ENCODE measurements at regions of chr3 and their contacts with region 1.

Region 1: GRCh38 chr3:127598841-127599570 is 795 bp downstream of the MCM2 start:
- DNase-seq: no peak
- ATAC-seq: no peak
- H3K4me3 ChIP-seq: peak overlapping the region; percentile 36 to 65 (median 57)
- H3K4me3 Mint-ChIP-seq: peak overlapping the region; percentile 82
- H3K27ac ChIP-seq: peak overlapping the region; percentile 75 to 87
- H3K27ac Mint-ChIP-seq: peak overlapping the region; percentile 97
- H3K4me1 ChIP-seq: peaks cover 10 to 16% of the 10 kb centered on the region in 2 donors
- H3K4me1 Mint-ChIP-seq: peaks cover 24% of the 10 kb centered on the region
- H3K27me3 ChIP-seq: no peaks in the 10 kb centered on the region
- H3K27me3 Mint-ChIP-seq: no peaks in the 10 kb centered on the region
- CTCF ChIP-seq: no peak

Region 2: DNA sequence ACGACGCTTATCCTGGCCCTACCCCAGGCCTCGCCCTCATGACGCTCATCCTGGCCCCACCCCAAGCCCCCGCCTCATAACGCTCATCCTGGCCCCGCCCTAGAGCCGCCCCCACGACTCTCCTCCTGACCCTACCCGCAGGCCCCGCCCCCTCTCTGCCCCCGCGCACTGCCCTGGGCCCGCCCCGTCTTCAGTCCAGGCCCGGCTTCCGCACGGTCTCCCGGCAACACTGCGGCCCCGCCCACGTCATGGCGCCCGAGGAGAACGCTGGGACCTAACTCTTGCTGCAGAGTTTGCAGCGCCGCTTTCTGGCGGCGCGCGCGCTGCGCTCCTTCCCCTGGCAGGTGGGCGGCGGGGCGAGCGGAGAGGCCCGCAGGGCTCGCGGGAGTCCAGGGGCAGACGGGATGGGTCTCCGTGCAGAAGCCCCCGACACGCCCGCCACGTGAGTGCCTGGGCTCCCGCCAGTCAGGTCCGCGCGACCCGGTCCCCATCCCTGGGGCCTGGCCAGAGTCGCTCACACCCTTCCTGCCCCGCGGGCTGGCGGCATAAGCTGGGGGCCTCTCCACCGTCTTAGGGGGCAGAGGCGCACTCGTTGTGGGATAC is 1682.5 kb before region 1 on chr3:
- CTCF ChIA-PET with region 1: no interaction called
- POLR2A ChIA-PET with region 1: no interaction called
- intact Hi-C with region 1: loop called (anchors 5 kb)
- DNase-seq: peak; percentile 94
- ATAC-seq: peak; percentile 90
- H3K4me3 ChIP-seq: peak overlapping the region; percentile 21 to 77 (median 74)
- H3K4me3 Mint-ChIP-seq: peak overlapping the region; percentile 93
- H3K27ac ChIP-seq: peak overlapping the region; percentile 78 to 85
- H3K27ac Mint-ChIP-seq: peak overlapping the region; percentile 96
- H3K4me1 ChIP-seq: peaks cover 0 to 15% of the 10 kb centered on the region in 2 donors
- H3K4me1 Mint-ChIP-seq: peaks cover 11% of the 10 kb centered on the region
- H3K27me3 ChIP-seq: no peaks in the 10 kb centered on the region
- H3K27me3 Mint-ChIP-seq: no peaks in the 10 kb centered on the region
- CTCF ChIP-seq: no peak

Region 3: DNA sequence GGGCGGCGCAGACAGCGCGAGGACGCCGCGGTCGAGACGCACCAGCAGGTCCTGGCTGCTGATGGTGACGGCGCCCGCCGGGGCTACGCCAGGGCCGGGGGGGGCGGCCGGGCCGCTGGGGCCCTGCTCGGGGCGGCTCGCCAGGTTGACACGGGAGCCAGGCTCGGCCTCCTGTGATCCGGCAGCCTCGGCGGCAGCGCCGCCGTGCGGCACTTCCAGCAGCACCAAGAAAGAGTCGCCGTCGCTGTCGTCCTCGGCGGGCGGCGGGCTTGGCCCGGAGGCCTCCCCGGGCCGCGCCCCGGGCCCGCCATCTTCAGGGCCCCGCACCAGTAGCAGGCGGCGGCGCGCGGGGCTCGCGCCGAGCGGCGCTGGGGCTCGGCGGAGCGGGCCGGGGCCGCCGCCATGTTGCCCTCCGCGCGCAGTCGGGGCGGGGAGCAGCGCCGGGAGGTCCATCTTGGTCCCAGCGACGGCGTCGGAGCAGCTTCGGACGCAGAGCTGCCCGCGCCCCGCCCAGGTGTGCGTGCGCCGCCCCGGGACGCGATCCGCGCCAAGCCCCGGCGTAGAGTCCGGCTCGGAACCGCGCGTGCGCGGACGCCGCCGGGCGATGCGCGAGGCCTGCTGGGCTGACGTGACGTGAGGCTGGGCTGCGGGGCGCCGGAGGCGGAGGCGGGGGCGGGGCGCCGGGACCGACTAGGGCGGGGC is 1123.4 kb before region 1 on chr3 and contains the start of gene ZXDC:
- CTCF ChIA-PET with region 1: no interaction called
- POLR2A ChIA-PET with region 1: no interaction called
- intact Hi-C with region 1: loop called (anchors 2 kb)
- DNase-seq: peak; percentile 96
- ATAC-seq: peak; percentile 84
- H3K4me3 ChIP-seq: peak within 1 kb of the TSS; percentile 51 to 84 (median 65)
- H3K4me3 Mint-ChIP-seq: peak within 1 kb of the TSS; percentile 89
- H3K27ac ChIP-seq: peak within 1 kb of the TSS; percentile 61 to 73
- H3K27ac Mint-ChIP-seq: peak within 1 kb of the TSS; percentile 91
- H3K4me1 ChIP-seq: peaks cover 35 to 39% of the 10 kb centered on the region in 2 donors
- H3K4me1 Mint-ChIP-seq: peaks cover 40% of the 10 kb centered on the region
- H3K27me3 ChIP-seq: no peaks in the 10 kb centered on the region
- H3K27me3 Mint-ChIP-seq: no peaks in the 10 kb centered on the region
- CTCF ChIP-seq: peak; percentile 29
- total RNA-seq, gene ZXDC: 70.9 and 75.9 TPM in 2 replicates

Region 4: GRCh38 chr3:127574880-127575878 is 23.8 kb before region 1 on chr3:
- CTCF ChIA-PET with region 1: interaction called, 26 read pairs
- POLR2A ChIA-PET with region 1: no interaction called
- intact Hi-C with region 1: loop called (anchors 1 kb)
- DNase-seq: peak; percentile 92
- ATAC-seq: peak; percentile 97
- H3K4me3 ChIP-seq: no peak overlapping the region
- H3K4me3 Mint-ChIP-seq: peak overlapping the region; percentile 52
- H3K27ac ChIP-seq: no peak overlapping the region
- H3K27ac Mint-ChIP-seq: peak overlapping the region; percentile 62
- H3K4me1 ChIP-seq: peaks cover 4 to 10% of the 10 kb centered on the region in 2 donors
- H3K4me1 Mint-ChIP-seq: peaks cover 9% of the 10 kb centered on the region
- H3K27me3 ChIP-seq: no peaks in the 10 kb centered on the region
- H3K27me3 Mint-ChIP-seq: no peaks in the 10 kb centered on the region
- CTCF ChIP-seq: peak; percentile 92

Region 5: DNA sequence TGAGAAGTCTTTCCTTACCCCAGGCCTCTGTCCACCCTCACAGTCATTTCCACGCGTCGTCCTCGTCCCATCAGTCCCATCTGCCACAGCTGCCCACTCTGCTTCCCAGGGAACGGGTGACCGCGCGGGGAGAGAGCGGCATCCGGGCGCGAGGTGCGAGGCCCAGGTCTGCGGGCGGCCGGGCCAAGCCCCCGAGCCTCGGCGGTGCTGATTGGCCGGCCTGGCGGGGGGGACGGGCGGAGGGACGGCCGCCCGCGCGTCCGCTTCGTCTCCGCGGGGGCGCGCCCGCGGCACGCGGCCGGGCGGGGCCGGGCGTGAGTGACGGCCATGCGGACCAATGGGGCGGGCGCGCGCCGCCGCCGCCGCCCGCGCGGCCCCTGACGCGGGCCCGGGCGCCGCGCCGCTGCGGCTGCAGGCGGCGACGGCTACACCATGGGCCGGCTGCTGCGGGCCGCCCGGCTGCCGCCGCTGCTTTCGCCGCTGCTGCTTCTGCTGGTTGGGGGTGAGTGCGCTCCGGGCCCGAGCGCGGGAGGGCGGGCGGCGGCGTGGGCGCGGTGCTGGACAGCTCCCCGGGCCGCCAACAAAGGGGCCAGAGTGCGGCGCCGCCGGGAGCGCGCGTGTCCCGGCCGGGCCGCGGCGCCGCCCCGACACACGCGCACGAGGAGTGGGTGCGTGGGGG is 29.9 kb after region 1 on chr3 and contains the start of gene PODXL2:
- CTCF ChIA-PET with region 1: no interaction called
- POLR2A ChIA-PET with region 1: no interaction called
- intact Hi-C with region 1: loop called (anchors 2 kb)
- DNase-seq: peak; percentile 64
- ATAC-seq: peak; percentile 59
- H3K4me3 ChIP-seq: peak within 1 kb of the TSS; percentile 2 to 72 (median 46)
- H3K4me3 Mint-ChIP-seq: peak within 1 kb of the TSS; percentile 94
- H3K27ac ChIP-seq: no peak within 1 kb of the TSS
- H3K27ac Mint-ChIP-seq: peak within 1 kb of the TSS; percentile 79
- H3K4me1 ChIP-seq: peaks cover 14 to 17% of the 10 kb centered on the region in 2 donors
- H3K4me1 Mint-ChIP-seq: peaks cover 27% of the 10 kb centered on the region
- H3K27me3 ChIP-seq: peaks cover 0 to 24% (median 13%) of the 10 kb centered on the region in 4 experiments
- H3K27me3 Mint-ChIP-seq: peaks cover 24% of the 10 kb centered on the region
- CTCF ChIP-seq: no peak
- total RNA-seq, gene PODXL2: 3.6 and 4.0 TPM in 2 replicates

Region 6: DNA sequence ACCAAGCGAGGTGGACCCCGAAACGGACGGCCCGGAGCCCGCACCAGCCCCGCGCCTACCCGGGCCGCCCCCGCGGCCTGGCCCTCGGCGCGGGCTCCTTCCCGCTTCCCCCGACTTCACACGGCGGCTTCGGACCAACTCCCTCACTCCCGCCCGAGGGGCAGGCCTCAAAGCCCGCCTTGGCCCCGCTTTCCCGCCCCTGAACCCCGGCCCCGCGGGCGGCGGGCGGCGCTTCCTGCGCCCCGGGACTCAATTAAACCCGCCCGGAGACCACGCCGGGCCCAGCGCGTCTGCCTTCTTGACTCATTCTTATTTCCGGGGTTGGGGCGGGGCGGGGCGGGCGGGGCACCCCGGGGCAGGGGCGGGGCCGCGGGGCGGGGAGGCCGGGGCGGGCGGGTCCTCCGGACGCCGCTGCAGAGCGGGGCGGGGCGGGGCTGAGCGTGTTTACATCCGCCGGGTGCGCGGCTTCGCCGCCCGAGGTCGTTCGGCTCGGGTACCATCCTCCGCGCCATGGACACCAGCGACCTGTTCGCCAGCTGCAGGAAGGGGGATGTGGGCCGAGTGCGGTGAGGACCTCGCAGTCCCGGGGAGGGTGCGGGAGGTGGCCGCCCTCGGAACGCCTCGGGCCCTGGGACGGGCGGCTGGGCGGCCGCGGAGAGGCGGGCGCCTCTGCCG is 73.6 kb after region 1 on chr3 and contains the start of gene ABTB1:
- CTCF ChIA-PET with region 1: interaction called, 3 read pairs
- POLR2A ChIA-PET with region 1: interaction called, 4 read pairs
- intact Hi-C with region 1: loop called (anchors 1 kb)
- DNase-seq: peak; percentile 88
- ATAC-seq: peak; percentile 87
- H3K4me3 ChIP-seq: peak within 1 kb of the TSS; percentile 41 to 87 (median 79)
- H3K4me3 Mint-ChIP-seq: peak within 1 kb of the TSS; percentile 94
- H3K27ac ChIP-seq: peak within 1 kb of the TSS; percentile 83 to 96
- H3K27ac Mint-ChIP-seq: peak within 1 kb of the TSS; percentile 98
- H3K4me1 ChIP-seq: peaks cover 16 to 22% of the 10 kb centered on the region in 2 donors
- H3K4me1 Mint-ChIP-seq: peaks cover 29% of the 10 kb centered on the region
- H3K27me3 ChIP-seq: no peaks in the 10 kb centered on the region
- H3K27me3 Mint-ChIP-seq: no peaks in the 10 kb centered on the region
- CTCF ChIP-seq: no peak
- total RNA-seq, gene ABTB1: 132 and 141 TPM in 2 replicates

Region 7: DNA sequence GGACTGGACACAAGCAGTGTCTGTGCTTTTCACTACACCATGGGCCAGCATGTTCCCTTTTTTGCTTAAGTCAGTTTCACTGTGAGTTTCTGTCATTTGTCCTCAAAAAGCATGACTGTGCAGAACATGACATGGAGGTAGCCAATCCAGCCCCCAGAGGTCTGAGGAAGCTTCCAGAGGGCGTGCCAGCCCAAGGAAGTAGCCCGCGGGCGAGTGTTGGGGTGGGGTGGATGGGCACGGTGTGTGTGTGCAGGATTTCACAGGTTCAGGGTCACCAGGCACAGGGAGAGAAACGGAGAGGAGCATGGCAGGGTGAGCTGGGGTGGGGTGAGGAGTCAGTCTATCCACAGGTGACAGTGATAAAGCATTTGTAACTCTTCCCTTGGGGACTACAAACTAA is 546.3 kb after region 1 on chr3:
- CTCF ChIA-PET with region 1: no interaction called
- POLR2A ChIA-PET with region 1: no interaction called
- intact Hi-C with region 1: no loop called
- DNase-seq: no peak
- ATAC-seq: no peak
- H3K4me3 ChIP-seq: no peak overlapping the region
- H3K4me3 Mint-ChIP-seq: no peak overlapping the region
- H3K27ac ChIP-seq: no peak overlapping the region
- H3K27ac Mint-ChIP-seq: no peak overlapping the region
- H3K4me1 ChIP-seq: no peaks in the 10 kb centered on the region
- H3K4me1 Mint-ChIP-seq: no peaks in the 10 kb centered on the region
- H3K27me3 ChIP-seq: no peaks in the 10 kb centered on the region
- H3K27me3 Mint-ChIP-seq: peaks cover 4% of the 10 kb centered on the region
- CTCF ChIP-seq: no peak

Measured in B cell (primary cell).